ENCODE measurements at regions of chr3 and their contacts with region 1.

Region 1: DNA sequence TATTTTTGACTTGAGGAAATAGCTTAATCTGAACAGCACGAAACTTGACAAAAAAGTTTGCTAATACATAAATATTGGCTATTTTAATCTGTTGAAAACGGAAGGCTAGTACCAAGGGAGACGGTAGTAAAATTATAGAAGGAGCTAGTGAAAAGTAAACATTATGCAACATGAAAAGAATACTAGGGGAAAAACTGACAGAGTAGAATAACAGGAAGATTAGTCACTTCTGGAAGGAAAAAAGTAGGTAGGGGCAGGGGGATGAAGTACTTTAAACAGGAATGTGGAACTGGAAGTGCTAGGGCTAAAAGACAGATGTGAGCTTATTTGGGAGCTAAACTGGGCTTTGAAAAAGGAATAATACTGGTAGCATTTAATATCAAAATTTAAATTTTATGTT is 60.1 kb downstream of the MBNL1 start:
- DNase-seq: no peak
- ATAC-seq: peak; percentile 17 to 71 (median 67)
- H3K4me3 ChIP-seq: no peak overlapping the region
- H3K27ac ChIP-seq: peak overlapping the region in 11 of 12 donors; percentile 1 to 82 (median 47)
- H3K4me1 ChIP-seq: peaks cover 7 to 85% (median 69%) of the 10 kb centered on the region in 12 donors
- H3K27me3 ChIP-seq: no peaks in the 10 kb centered on the region
- CTCF ChIP-seq: no peak
- POLR2A ChIP-seq: no peak

Region 2: GRCh38 chr3:152127058-152127457 is 201.8 kb before region 1 on chr3:
- intact Hi-C with region 1: no loop called
- DNase-seq: no peak
- ATAC-seq: no peak
- H3K4me3 ChIP-seq: no peak overlapping the region
- H3K27ac ChIP-seq: no peak overlapping the region
- H3K4me1 ChIP-seq: no peaks in the 10 kb centered on the region
- H3K27me3 ChIP-seq: no peaks in the 10 kb centered on the region
- CTCF ChIP-seq: no peak
- POLR2A ChIP-seq: no peak

Region 3: GRCh38 chr3:152365766-152366593 is 37.1 kb after region 1 on chr3:
- intact Hi-C with region 1: no loop called
- DNase-seq: no peak
- ATAC-seq: peak in 3 of 4 donors; percentile 42 to 72 (median 53)
- H3K4me3 ChIP-seq: no peak overlapping the region
- H3K27ac ChIP-seq: peak overlapping the region in 3 of 12 donors; percentile 1 to 56 (median 39)
- H3K4me1 ChIP-seq: peaks cover 0 to 84% (median 58%) of the 10 kb centered on the region in 12 donors
- H3K27me3 ChIP-seq: no peaks in the 10 kb centered on the region
- CTCF ChIP-seq: no peak
- POLR2A ChIP-seq: no peak

Region 4: GRCh38 chr3:152382312-152383135 is 53.7 kb after region 1 on chr3:
- intact Hi-C with region 1: loop called in 3 of 10 experiments (anchors 5 to 10 kb)
- DNase-seq: no peak
- ATAC-seq: peak in 2 of 4 donors; percentile 32 to 48
- H3K4me3 ChIP-seq: peak overlapping the region in 10 of 12 donors; percentile 3 to 54 (median 36)
- H3K27ac ChIP-seq: peak overlapping the region; percentile 23 to 81 (median 72)
- H3K4me1 ChIP-seq: peaks cover 14 to 98% (median 87%) of the 10 kb centered on the region in 12 donors
- H3K27me3 ChIP-seq: no peaks in the 10 kb centered on the region
- CTCF ChIP-seq: no peak
- POLR2A ChIP-seq: no peak